ENCODE measurements at regions of chr14 and their contacts with region 1.

Region 1: GRCh38 chr14:103292426-103293374 is 41.3 kb upstream of the EIF5 start:
- DNase-seq: peak; percentile 84
- H3K4me3 ChIP-seq: no peak overlapping the region
- H3K27ac ChIP-seq: no peak overlapping the region
- H3K4me1 ChIP-seq: no peaks in the 10 kb centered on the region
- H3K27me3 ChIP-seq: peaks cover 25% of the 10 kb centered on the region
- CTCF ChIP-seq: peak; percentile 90 to 94 (median 91)
- EP300 ChIP-seq: no peak
- POLR2A ChIP-seq: no peak

Region 2: DNA sequence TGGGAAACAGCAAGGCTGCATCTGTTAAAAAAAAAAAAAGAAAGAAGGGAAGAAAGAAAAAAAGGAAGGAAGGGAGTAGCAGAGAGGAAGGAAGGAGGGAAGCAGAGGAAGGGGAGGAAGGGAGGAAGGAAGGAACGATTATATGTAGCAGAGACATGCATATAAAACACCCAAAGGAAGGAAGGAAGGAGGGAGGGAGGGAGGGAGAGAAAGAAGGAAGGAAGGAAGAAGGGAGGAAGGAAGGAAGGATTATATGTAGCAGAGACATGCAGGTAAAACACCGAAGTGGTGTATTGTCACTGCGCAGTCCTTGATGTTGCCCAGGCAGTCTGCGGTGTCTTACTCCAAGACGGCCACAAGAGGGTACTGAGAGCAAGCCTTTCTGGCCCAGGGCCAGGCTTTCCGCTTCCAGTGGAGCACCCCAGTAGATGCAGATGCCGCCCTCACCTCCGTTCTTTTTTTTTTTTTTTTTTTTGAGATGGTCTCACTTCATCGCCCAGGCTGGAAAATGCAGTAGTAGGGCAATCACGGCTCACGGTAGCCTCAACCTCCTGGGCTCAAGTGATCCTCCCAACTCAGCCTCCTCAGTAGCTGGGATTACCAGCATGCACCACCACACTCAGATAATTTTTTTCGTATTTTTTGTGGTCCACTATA is 214.5 kb before region 1 on chr14:
- in situ Hi-C with region 1: loop called in 2 of 4 experiments (anchors 10 to 25 kb)
- intact Hi-C with region 1: no loop called
- DNase-seq: peak; percentile 85
- H3K4me3 ChIP-seq: no peak overlapping the region
- H3K27ac ChIP-seq: no peak overlapping the region
- H3K4me1 ChIP-seq: peaks cover 9 to 20% (median 13%) of the 10 kb centered on the region in 4 donors
- H3K27me3 ChIP-seq: no peaks in the 10 kb centered on the region
- CTCF ChIP-seq: peak; percentile 72 to 92 (median 78)
- EP300 ChIP-seq: no peak
- POLR2A ChIP-seq: no peak

Region 3: DNA sequence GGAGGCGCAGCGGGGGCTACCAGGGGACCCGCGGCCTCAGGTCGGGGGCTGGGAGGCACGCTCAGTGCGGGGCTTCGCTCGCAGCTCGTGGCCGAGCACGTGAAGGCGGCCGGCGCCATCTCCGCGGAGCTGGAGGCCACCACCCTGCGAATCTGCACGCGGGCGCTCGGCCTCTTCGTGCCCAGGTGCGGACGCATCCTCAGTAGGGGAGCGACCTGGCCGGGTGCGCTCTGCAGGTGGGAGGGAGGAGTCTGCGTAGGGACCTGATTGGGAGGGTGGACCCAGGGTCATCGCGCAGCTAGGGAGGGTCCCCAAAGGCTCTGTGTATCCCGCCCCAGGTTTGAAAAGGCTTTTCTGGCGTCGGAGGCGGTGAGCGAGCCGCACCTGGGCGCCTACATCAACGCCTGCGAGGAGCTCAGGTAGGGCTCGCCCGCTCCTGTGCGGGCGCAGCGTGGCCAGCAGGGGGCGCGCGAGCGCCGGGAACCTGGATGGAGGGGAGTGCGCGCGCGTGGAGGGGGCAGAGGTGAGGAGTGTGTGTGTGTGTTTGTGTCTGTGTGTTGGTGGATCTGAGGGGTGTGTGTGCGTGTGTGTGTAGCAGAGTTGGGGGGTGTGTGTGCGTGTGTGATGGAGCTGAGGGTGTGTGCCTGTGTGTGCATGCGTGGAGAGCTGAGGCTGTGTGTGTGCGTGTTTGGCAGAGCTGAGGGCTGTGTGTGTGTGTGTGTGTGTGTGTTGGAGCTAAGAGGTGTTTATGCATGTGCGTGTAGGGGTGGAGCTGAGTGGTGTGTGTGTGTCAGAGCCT is 187.8 kb before region 1 on chr14:
- in situ Hi-C with region 1: loop called in 3 of 4 experiments (anchors 10 kb)
- intact Hi-C with region 1: loop called (anchors 2 kb)
- DNase-seq: peak; percentile 78
- H3K4me3 ChIP-seq: peak overlapping the region in 2 of 4 donors; percentile 2 to 27
- H3K27ac ChIP-seq: peak overlapping the region in 1 of 4 donors; percentile 41
- H3K4me1 ChIP-seq: peaks cover 12 to 39% (median 26%) of the 10 kb centered on the region in 4 donors
- H3K27me3 ChIP-seq: peaks cover 32% of the 10 kb centered on the region
- CTCF ChIP-seq: peak; percentile 97 to 99 (median 98)
- EP300 ChIP-seq: no peak
- POLR2A ChIP-seq: peak; percentile 31

Region 4: GRCh38 chr14:103185051-103185992 is 107.4 kb before region 1 on chr14:
- in situ Hi-C with region 1: loop called in 1 of 4 experiments (anchors 25 kb)
- intact Hi-C with region 1: no loop called
- DNase-seq: no peak
- H3K4me3 ChIP-seq: no peak overlapping the region
- H3K27ac ChIP-seq: no peak overlapping the region
- H3K4me1 ChIP-seq: peaks cover 2 to 28% (median 12%) of the 10 kb centered on the region in 4 donors
- H3K27me3 ChIP-seq: peaks cover 40% of the 10 kb centered on the region
- CTCF ChIP-seq: peak; percentile 61 to 78 (median 71)
- EP300 ChIP-seq: no peak
- POLR2A ChIP-seq: no peak